ENCODE measurements at regions of chr19 and their contacts with region 1.

Region 1: DNA sequence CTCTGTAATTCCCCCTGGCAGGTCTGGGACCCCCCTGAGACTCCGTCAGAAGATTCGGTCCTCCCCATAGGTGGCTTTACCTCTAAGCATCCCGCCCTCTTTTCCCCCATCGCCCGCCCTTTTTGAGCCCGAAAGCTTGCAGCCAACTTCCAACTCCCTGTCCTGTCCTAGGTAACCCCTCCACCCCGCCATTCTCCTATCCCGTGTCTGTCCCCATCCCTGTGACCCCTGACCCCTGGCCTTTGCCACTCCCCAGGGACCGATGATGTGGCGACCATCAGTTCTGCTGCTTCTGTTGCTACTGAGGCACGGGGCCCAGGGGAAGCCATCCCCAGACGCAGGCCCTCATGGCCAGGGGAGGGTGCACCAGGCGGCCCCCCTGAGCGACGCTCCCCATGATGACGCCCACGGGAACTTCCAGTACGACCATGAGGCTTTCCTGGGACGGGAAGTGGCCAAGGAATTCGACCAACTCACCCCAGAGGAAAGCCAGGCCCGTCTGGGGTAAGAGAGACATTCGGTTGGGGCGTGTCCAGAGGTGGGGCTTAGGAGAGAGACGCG is 488 bp downstream of the RCN3 start:
- DNase-seq: no peak
- ATAC-seq: no peak
- H3K4me3 ChIP-seq: peak overlapping the region; percentile 46 to 58
- H3K27ac ChIP-seq: no peak overlapping the region
- H3K4me1 ChIP-seq: no peaks in the 10 kb centered on the region
- H3K27me3 ChIP-seq: no peaks in the 10 kb centered on the region
- CTCF ChIP-seq: no peak

Region 2: GRCh38 chr19:49430678-49431329 is 97.5 kb before region 1 on chr19:
- CTCF ChIA-PET with region 1: no interaction called
- POLR2A ChIA-PET with region 1: no interaction called
- in situ Hi-C with region 1: no loop called
- intact Hi-C with region 1: no loop called
- DNase-seq: no peak
- ATAC-seq: no peak
- H3K4me3 ChIP-seq: no peak overlapping the region
- H3K27ac ChIP-seq: no peak overlapping the region
- H3K4me1 ChIP-seq: no peaks in the 10 kb centered on the region; the same call in 1 of the 2 replicates
- H3K27me3 ChIP-seq: no peaks in the 10 kb centered on the region; the same call in 1 of the 2 replicates
- CTCF ChIP-seq: no peak; the same call in 1 of the 2 replicates

Region 3: DNA sequence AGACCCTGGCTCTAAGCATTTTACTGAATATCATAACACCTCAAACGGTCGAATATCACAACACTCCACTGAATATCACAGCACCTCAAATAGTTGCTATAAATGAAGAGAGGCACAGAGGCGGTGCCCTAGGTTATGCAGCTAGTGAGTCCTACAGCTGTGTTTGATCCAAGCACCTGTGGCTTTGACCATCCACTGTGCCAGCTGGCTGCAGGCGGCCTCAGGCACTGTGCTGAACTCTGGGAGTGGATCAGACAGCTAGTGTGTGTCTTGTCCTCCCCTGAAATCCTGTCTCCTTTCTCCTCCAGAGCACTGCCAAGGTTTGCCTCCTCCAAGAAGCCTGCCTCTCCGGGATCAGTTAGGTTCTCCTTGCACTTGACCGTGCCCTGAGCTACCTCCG is 44.7 kb after region 1 on chr19:
- CTCF ChIA-PET with region 1: interaction called, 14 read pairs
- POLR2A ChIA-PET with region 1: no interaction called
- in situ Hi-C with region 1: no loop called
- intact Hi-C with region 1: no loop called
- DNase-seq: no peak
- ATAC-seq: no peak
- H3K4me3 ChIP-seq: no peak overlapping the region
- H3K27ac ChIP-seq: no peak overlapping the region
- H3K4me1 ChIP-seq: peaks cover 7% of the 10 kb centered on the region
- H3K27me3 ChIP-seq: no peaks in the 10 kb centered on the region
- CTCF ChIP-seq: no peak